Activated CD8-positive, alpha-beta memory T cell treated with anti-CD3 and anti-CD28 coated beads, Interleukin-2, amount 10 ng/mL, durations not matched to agents 7 days and 5 days (primary cell): ENCODE measurements at regions of chr14 and their contacts with region 1.

Region 1: GRCh38 chr14:94548999-94549985 is 11.9 kb upstream of the SERPINA4 start:
- DNase-seq: peak; percentile 60
- ATAC-seq: peak; percentile 70
- H3K4me3 Mint-ChIP-seq: no peak overlapping the region
- H3K27ac Mint-ChIP-seq: no peak overlapping the region
- H3K4me1 Mint-ChIP-seq: no peaks in the 10 kb centered on the region
- H3K27me3 Mint-ChIP-seq: peaks cover 13% of the 10 kb centered on the region

Region 2: DNA sequence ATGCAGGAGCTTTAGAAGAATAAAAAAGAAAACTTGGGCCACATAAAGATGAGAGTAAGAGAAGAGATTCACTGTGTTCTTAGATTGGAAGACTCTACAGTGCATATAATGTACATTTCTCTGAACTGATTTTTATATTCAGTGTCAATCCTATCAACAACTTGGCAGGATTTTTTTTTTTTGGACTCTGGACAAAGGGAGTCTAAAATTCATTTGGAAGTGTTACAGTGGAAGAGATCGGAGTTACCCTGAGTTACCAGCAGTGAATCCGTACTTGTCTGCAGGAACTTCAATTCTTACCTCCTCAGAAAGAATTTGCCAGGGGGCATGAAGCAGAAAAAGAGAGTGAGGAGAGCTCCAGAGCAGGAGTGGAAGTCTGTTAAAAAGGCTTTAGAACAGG is 120.7 kb before region 1 on chr14:
- CTCF ChIA-PET with region 1: interaction called, 14 read pairs
- DNase-seq: no peak
- ATAC-seq: no peak
- H3K4me3 Mint-ChIP-seq: no peak overlapping the region
- H3K27ac Mint-ChIP-seq: no peak overlapping the region
- H3K4me1 Mint-ChIP-seq: no peaks in the 10 kb centered on the region
- H3K27me3 Mint-ChIP-seq: peaks cover 23% of the 10 kb centered on the region